GM10248 (cell line): ENCODE measurements at regions of chr5 and their contacts with region 1.

Region 1: DNA sequence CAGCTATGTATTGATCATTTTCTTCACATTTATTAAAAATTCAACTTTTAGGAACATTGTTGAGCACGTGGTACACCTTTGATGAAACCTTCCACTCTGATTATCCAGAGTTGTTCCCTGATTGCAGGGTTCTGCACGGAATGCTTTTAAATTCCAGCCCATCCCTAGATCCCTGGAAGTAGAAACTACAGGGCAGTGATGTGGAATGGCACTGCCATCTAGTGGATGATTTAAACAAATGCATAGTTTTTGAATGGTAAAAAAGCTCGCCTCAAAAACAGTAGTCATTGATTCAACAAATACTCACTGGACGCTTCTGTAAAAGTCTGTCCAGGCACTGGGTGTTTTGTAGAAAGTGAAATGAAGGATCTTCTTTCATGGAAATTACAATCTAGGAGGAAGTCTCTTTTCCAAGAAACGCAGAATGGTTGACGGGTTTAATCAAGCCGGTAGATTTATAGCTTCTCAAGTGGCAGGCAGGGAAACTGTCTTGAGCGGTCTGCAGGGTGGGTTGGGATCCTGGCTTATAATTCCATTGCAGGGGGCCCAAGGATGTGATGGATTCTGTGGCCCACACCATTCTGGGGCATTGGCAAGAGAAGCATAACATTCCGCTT is 118.4 kb downstream of the ARHGAP26 start:
- DNase-seq: peak; percentile 44
- CTCF ChIP-seq: peak; percentile 63

Region 2: GRCh38 chr5:142874537-142874936 is 14.0 kb before region 1 on chr5:
- CTCF ChIA-PET with region 1: interaction called, 28 read pairs
- POLR2A ChIA-PET with region 1: no interaction called
- DNase-seq: no peak
- CTCF ChIP-seq: no peak

Region 3: DNA sequence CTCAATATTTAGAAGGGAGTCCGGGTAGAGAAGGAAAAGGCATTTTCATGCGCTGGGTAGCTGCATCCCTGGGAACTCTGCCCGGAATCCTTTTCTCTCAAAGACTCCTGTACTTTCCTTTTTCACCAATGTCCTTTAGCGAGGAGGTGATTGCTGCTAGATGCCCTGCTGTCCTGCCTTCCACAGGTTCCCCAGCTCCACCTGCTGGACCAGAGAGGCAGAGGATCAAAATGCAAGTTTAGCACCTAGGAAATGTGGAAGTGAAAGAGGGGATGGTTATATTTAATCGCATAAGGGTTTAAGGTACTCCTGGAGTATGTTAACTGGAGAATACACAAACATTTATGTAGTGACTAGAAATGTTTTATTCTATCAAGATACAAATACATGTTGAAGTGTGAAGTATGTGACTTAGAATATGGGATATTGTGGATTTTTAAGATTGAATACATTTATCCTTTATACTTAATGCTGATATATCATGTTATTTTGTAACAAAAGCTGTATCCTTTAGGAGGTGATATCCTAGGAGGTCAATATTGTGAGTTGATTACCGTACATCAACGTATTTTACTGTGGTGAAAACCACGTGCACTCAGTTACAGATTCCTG is 27.3 kb after region 1 on chr5:
- CTCF ChIA-PET with region 1: interaction called, 14 read pairs
- POLR2A ChIA-PET with region 1: no interaction called
- DNase-seq: peak; percentile 48
- CTCF ChIP-seq: peak; percentile 41